Endothelial cell of umbilical vein (primary cell): ENCODE measurements at regions of chr4 and their contacts with region 1.

Region 1: GRCh38 chr4:11774346-11774745 is 345.7 kb upstream of the HS3ST1 start:
- DNase-seq: peak; percentile 83
- H3K4me3 ChIP-seq: no peak overlapping the region
- H3K27ac ChIP-seq: peak overlapping the region; percentile 21
- H3K4me1 ChIP-seq: peaks cover 12% of the 10 kb centered on the region
- H3K27me3 ChIP-seq: no peaks in the 10 kb centered on the region
- CTCF ChIP-seq: no peak
- POLR2A ChIP-seq: no peak

Region 2: GRCh38 chr4:11805842-11806241 is 31.5 kb after region 1 on chr4:
- CTCF ChIA-PET with region 1: interaction called, 4 read pairs
- POLR2A ChIA-PET with region 1: no interaction called
- dilution Hi-C with region 1: no loop called
- intact Hi-C with region 1: loop called (anchors 1 kb)
- DNase-seq: peak; percentile 81
- H3K4me3 ChIP-seq: no peak overlapping the region
- H3K27ac ChIP-seq: peak overlapping the region; percentile 45
- H3K4me1 ChIP-seq: peaks cover 21% of the 10 kb centered on the region
- H3K27me3 ChIP-seq: no peaks in the 10 kb centered on the region
- CTCF ChIP-seq: peak; percentile 58 to 65
- POLR2A ChIP-seq: no peak